CD4-positive, alpha-beta memory T cell (primary cell): ENCODE measurements at regions of chr3 and their contacts with region 1.

Region 1: DNA sequence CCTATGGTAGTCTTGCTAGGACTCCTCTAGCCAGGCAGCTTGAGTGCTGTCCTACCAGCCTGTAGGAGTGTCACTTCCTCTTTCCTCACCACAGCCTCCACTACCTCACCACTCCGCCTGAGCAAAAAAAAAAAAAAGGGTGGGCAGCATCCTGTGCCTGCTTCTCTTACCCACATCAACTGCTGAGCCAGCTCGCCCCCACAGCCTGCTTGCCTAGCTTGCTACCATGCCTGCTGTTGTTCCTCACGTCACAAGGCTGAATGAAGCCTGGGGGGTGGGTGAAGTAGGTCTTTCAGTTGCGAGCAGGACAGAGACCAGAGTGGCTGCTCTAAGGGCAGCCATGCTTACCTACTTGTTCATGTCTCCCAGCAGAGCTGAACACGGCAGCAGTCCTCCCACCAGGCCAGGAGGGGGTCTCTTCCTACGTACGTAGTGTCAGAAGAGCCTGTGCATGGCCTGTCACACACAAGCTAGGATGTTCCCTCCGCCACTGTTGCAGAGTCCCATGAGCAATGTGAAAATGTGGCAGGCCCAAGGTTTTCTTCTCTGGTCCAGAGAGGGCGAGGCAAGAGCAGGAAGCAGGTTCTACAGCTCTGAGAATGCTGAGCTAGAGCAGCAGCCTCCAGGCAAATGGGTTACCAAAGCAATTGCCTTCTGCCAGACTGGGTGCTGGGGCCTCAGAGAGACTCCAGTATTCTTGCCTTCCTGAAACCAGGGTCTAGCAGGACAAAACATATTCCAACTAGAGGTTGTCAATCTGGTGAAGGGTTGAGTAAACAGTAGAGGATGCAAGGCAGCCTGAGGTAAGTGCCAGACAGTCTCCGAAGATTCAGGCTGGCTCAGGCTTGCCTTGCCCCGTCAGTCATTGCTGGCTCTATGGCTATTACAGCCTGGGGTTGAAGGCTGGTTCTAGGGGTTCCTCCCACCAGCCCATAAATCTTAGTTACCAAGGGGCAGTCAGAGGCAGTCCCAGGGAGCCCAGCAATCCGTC is 8.1 kb downstream of the PPM1M start:
- DNase-seq: peak; percentile 90 to 97 (median 93)
- H3K4me3 ChIP-seq: peak overlapping the region; percentile 10 to 16
- H3K4me3 Mint-ChIP-seq: peak overlapping the region; percentile 85 to 97 (median 90)
- H3K27ac ChIP-seq: peak overlapping the region; percentile 86
- H3K27ac Mint-ChIP-seq: peak overlapping the region; percentile 97 to 100 (median 100)
- H3K4me1 ChIP-seq: peaks cover 99% of the 10 kb centered on the region
- H3K4me1 Mint-ChIP-seq: peaks cover 54 to 99% (median 82%) of the 10 kb centered on the region in 4 donors
- H3K27me3 ChIP-seq: no peaks in the 10 kb centered on the region
- H3K27me3 Mint-ChIP-seq: no peaks in the 10 kb centered on the region

Region 2: DNA sequence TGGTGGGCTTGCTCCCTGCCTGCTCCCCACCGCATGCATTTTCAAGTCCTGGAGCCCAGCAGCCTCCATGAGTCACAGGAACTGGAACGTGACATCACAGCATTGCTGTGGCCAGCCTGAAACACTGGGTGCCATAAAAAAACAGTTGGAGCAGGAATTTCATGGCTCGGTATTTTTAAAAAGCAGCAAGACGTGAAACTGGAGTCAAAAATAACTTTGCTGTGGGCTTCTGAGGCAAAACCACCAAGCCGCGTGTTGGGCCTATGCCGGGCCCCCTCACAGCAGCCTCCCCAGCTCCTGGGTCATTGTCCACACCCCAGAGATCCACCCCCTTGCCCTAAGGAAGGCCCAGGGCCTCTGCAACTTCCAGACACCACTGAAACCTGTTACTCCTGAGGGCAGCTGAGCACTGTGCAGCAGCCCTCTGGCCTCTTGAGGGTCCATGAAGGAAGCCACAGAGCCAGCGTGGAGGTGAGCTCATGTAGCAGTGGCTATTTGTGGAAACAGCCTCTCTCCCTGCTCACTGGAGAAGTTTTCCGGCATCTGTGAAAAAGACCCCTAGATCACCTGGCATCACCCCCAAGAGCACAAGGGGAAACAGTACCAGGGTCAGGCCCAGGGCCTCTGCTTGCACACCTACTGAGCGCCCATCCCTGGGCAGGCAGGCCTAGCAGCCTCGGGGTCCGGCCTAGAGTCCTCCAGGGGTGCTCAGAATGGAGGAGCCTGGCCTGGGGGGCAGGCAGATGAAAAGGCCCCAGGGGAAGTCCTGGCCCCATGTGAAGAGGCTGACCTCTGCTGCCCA is 163.3 kb before region 1 on chr3:
- CTCF ChIA-PET with region 1: no interaction called
- POLR2A ChIA-PET with region 1: no interaction called
- intact Hi-C with region 1: no loop called
- DNase-seq: no peak
- H3K4me3 ChIP-seq: no peak overlapping the region
- H3K4me3 Mint-ChIP-seq: no peak overlapping the region
- H3K27ac ChIP-seq: no peak overlapping the region
- H3K27ac Mint-ChIP-seq: no peak overlapping the region
- H3K4me1 ChIP-seq: peaks cover 12% of the 10 kb centered on the region
- H3K4me1 Mint-ChIP-seq: peaks cover 7 to 24% (median 14%) of the 10 kb centered on the region in 4 donors
- H3K27me3 ChIP-seq: no peaks in the 10 kb centered on the region
- H3K27me3 Mint-ChIP-seq: no peaks in the 10 kb centered on the region

Region 3: DNA sequence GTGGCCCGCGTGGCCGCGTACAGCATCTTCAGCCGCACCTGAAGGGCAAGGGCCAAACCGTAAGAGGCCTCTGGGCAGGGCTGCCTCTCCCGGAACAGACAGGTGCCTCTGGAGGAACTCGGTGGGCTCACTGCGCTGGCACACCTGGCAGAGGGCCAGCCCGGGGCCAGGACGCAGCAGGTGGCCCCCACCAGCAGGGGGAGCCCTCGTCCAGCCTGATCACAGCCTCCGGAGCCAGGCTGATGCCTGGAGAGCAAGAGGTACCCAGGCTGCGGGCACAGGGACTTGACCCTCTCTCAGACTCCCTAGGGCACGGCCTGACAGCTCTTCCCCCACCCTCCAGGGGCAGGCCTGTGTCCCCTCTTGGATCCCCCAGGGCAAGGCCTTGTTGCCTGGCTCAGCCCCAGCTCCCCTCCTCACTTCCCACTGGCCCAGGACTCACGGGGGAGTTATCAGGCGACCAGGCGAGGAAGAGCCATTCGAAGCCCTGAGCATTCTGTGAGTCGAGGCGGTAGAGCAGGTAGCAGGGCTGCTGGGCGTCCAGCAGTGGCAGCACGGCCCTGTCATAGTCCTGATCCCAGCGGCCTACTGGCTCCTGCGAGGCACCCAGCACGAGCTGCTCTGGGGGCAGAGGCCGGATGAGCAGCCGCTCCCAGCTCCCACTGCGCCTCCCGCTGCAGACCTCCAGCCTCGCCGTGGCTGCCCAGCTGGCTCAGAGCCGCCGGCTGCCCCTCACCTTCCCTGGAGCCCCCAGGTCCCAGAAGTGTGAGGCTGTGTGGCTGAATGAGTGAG is 21.9 kb before region 1 on chr3:
- CTCF ChIA-PET with region 1: interaction called, 20 read pairs
- POLR2A ChIA-PET with region 1: interaction called, 214 read pairs
- intact Hi-C with region 1: no loop called
- DNase-seq: peak; percentile 82 to 88 (median 85)
- H3K4me3 ChIP-seq: no peak overlapping the region
- H3K4me3 Mint-ChIP-seq: peak overlapping the region in 7 of 8 donors; percentile 35 to 82 (median 66)
- H3K27ac ChIP-seq: no peak overlapping the region
- H3K27ac Mint-ChIP-seq: peak overlapping the region; percentile 29 to 89 (median 81)
- H3K4me1 ChIP-seq: peaks cover 57% of the 10 kb centered on the region
- H3K4me1 Mint-ChIP-seq: peaks cover 23 to 77% (median 43%) of the 10 kb centered on the region in 4 donors
- H3K27me3 ChIP-seq: no peaks in the 10 kb centered on the region
- H3K27me3 Mint-ChIP-seq: no peaks in the 10 kb centered on the region